MCF 10A (cell line): ENCODE measurements at regions of chr1 and their contacts with region 1.

Region 1: GRCh38 chr1:201309426-201309825 is 26.1 kb downstream of the PKP1 start:
- DNase-seq: peak; percentile 98
- H3K4me3 Mint-ChIP-seq: peak overlapping the region; percentile 1
- H3K27ac Mint-ChIP-seq: peak overlapping the region; percentile 97
- H3K4me1 Mint-ChIP-seq: peaks cover 71% of the 10 kb centered on the region
- H3K27me3 Mint-ChIP-seq: no peaks in the 10 kb centered on the region
- CTCF ChIP-seq: peak; percentile 38

Region 2: DNA sequence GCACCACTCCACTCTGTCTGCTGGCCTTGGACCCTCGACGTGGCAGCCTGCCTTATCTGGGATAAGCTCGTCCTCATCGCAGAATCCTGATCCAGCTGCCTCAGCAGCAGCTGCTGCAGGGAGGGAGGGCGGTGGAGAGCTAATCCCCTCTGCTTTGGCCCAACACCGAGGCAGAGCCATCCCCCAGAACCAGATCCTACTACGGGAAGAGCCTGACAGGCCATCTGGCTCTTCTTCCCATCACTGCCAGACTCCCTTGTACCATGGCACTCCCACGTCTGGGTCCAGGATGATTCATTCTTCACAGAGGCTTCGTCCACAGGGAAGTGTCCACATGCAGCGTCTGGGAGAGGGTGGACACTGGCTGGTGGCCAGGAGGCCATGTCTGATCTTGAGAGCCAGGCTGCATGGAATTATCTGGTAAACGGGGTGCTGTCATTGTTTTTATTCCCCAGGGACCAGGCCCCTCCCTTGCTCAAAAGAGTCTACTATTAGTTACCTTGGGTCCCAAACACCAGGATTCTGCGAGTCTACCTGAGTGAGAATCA is 40.7 kb before region 1 on chr1:
- CTCF ChIA-PET with region 1: interaction called, 474 read pairs
- POLR2A ChIA-PET with region 1: interaction called, 3,819 read pairs
- intact Hi-C with region 1: no loop called
- DNase-seq: peak; percentile 99
- H3K4me3 Mint-ChIP-seq: no peak overlapping the region
- H3K27ac Mint-ChIP-seq: peak overlapping the region; percentile 89
- H3K4me1 Mint-ChIP-seq: peaks cover 48% of the 10 kb centered on the region
- H3K27me3 Mint-ChIP-seq: no peaks in the 10 kb centered on the region
- CTCF ChIP-seq: no peak

Region 3: GRCh38 chr1:201282931-201283829 is 26.2 kb before region 1 on chr1 and contains the start of gene PKP1:
- CTCF ChIA-PET with region 1: interaction called, 303 read pairs
- POLR2A ChIA-PET with region 1: interaction called, 3,819 read pairs
- intact Hi-C with region 1: no loop called
- DNase-seq: no peak
- H3K4me3 Mint-ChIP-seq: no peak within 1 kb of the TSS
- H3K27ac Mint-ChIP-seq: peak within 1 kb of the TSS; percentile 40
- H3K4me1 Mint-ChIP-seq: peaks cover 22% of the 10 kb centered on the region
- H3K27me3 Mint-ChIP-seq: no peaks in the 10 kb centered on the region
- CTCF ChIP-seq: no peak
- total RNA-seq, gene PKP1: 0.30 and 0.32 TPM in 2 replicates

Region 4: DNA sequence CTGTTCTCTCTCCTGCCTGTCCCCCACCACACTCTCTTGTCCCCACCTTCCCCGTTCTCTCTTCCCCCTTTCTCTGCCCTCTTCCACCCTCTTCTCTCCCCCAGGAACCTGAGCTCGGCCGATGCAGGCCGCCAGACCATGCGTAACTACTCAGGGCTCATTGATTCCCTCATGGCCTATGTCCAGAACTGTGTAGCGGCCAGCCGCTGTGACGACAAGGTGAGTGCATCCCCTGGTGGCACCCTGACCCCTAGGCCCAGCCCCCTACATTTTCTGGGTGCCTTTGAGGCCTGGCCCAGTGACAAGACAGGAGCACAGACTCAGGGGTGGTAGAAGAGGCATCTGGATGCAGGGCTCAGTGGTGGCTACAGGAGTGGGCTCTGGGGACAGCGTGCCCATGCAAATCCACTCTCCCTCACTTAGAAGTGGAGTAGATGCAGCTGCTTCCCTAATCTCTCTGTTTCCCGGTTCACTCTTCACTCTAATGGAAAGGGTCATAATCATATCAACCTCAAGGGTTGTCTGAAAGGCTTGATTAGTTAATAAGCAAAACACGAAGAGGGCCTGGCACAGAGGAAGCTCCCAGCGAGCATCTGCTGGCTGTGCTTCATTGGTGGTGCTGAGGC is 10.8 kb after region 1 on chr1:
- CTCF ChIA-PET with region 1: interaction called, 14 read pairs
- POLR2A ChIA-PET with region 1: interaction called, 3,819 read pairs
- intact Hi-C with region 1: loop called (anchors 1 kb)
- DNase-seq: no peak
- H3K4me3 Mint-ChIP-seq: no peak overlapping the region
- H3K27ac Mint-ChIP-seq: no peak overlapping the region
- H3K4me1 Mint-ChIP-seq: peaks cover 24% of the 10 kb centered on the region
- H3K27me3 Mint-ChIP-seq: no peaks in the 10 kb centered on the region
- CTCF ChIP-seq: no peak

Region 5: DNA sequence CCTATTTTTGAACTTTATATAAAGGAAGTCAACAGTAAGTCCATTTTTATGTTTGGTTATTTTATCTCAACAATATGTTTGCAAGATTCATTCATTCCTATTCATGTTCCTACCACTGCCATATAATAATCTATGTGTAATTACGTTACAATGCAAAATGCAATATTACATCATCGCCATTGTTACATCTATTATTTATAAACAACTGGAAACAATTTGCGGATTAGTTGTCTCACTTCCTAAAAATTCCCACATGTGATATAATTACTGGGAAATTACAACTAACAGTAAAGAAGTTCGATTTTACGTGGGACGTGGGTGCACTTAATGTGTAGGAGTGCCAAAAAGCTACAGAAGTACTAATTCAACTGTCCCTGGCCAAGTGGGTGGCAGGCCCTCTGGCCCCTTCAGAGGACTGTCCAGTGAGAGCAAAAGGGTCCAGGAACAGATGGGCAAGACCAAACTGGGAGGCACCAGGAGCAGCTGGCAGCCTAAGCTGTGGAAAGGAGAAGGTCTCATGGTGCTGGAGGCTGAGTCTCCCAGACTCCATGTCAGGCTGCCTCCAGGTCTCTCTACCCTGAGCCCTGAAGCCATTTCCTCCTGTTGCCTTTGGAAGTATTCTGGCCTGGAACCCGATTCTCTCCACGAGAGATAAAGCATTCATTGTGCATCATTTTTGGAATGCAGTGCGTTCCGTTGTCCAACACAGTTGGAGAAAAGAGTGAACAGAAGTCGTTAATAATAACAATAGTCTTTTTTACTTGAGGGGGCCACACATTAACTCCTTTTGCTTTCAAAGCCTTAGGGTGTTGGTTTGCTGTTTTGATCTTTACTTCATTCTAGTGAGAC is 25.1 kb after region 1 on chr1:
- CTCF ChIA-PET with region 1: interaction called, 7 read pairs
- POLR2A ChIA-PET with region 1: interaction called, 13 read pairs
- intact Hi-C with region 1: no loop called
- DNase-seq: no peak
- H3K4me3 Mint-ChIP-seq: no peak overlapping the region
- H3K27ac Mint-ChIP-seq: no peak overlapping the region
- H3K4me1 Mint-ChIP-seq: peaks cover 11% of the 10 kb centered on the region
- H3K27me3 Mint-ChIP-seq: no peaks in the 10 kb centered on the region
- CTCF ChIP-seq: no peak